ENCODE measurements at regions of chr17 and their contacts with region 1.

Region 1: GRCh38 chr17:59837308-59838051 is 55.3 kb downstream of the TUBD1 start:
- DNase-seq: no peak
- ATAC-seq: peak; percentile 87
- H3K4me3 Mint-ChIP-seq: peak overlapping the region; percentile 96
- H3K27ac Mint-ChIP-seq: peak overlapping the region; percentile 97
- H3K4me1 Mint-ChIP-seq: peaks cover 60% of the 10 kb centered on the region
- H3K27me3 Mint-ChIP-seq: no peaks in the 10 kb centered on the region
- CTCF ChIP-seq: no peak

Region 2: GRCh38 chr17:59775734-59776645 is 61.5 kb before region 1 on chr17:
- CTCF ChIA-PET with region 1: interaction called, 3 read pairs
- POLR2A ChIA-PET with region 1: interaction called, 10 read pairs
- intact Hi-C with region 1: no loop called
- DNase-seq: no peak
- ATAC-seq: no peak
- H3K4me3 Mint-ChIP-seq: no peak overlapping the region
- H3K27ac Mint-ChIP-seq: no peak overlapping the region
- H3K4me1 Mint-ChIP-seq: peaks cover 10% of the 10 kb centered on the region
- H3K27me3 Mint-ChIP-seq: no peaks in the 10 kb centered on the region
- CTCF ChIP-seq: no peak

Region 3: DNA sequence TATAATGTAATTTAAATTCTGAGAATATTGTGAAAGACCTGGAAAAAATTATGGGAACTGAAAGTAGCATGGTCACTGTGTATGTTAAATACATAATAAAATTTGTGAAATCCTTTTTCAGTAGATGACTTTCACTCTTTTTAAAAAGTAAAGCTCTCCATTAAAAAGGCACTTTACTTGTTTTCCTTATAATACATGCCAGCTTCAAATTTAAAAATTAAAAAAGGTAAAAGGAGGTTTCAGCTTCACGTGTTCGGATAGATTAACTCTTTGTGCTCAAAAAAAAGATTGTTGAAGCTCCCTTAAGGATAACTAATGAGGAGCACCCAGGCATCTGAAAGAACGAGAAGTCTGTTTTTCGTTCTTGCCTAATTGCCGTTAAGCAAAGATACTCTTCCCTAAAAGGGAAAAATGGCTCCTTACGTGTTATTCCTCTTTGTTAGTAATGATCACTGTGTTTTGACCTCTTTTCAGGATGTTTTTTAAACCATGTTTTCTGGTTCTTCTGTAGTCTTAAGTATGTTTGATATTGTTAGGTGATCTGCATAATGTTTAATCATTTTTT is 32.5 kb before region 1 on chr17:
- CTCF ChIA-PET with region 1: no interaction called
- POLR2A ChIA-PET with region 1: interaction called, 15 read pairs
- intact Hi-C with region 1: no loop called
- DNase-seq: no peak
- ATAC-seq: no peak
- H3K4me3 Mint-ChIP-seq: peak overlapping the region; percentile 71
- H3K27ac Mint-ChIP-seq: peak overlapping the region; percentile 76
- H3K4me1 Mint-ChIP-seq: peaks cover 11% of the 10 kb centered on the region
- H3K27me3 Mint-ChIP-seq: no peaks in the 10 kb centered on the region
- CTCF ChIP-seq: no peak

Region 4: GRCh38 chr17:59853168-59853918 is 15.9 kb after region 1 on chr17:
- CTCF ChIA-PET with region 1: interaction called, 16 read pairs
- POLR2A ChIA-PET with region 1: no interaction called
- intact Hi-C with region 1: loop called (anchors 2 kb)
- DNase-seq: no peak
- ATAC-seq: peak; percentile 78
- H3K4me3 Mint-ChIP-seq: no peak overlapping the region
- H3K27ac Mint-ChIP-seq: peak overlapping the region; percentile 78
- H3K4me1 Mint-ChIP-seq: peaks cover 25% of the 10 kb centered on the region
- H3K27me3 Mint-ChIP-seq: no peaks in the 10 kb centered on the region
- CTCF ChIP-seq: no peak

Region 5: DNA sequence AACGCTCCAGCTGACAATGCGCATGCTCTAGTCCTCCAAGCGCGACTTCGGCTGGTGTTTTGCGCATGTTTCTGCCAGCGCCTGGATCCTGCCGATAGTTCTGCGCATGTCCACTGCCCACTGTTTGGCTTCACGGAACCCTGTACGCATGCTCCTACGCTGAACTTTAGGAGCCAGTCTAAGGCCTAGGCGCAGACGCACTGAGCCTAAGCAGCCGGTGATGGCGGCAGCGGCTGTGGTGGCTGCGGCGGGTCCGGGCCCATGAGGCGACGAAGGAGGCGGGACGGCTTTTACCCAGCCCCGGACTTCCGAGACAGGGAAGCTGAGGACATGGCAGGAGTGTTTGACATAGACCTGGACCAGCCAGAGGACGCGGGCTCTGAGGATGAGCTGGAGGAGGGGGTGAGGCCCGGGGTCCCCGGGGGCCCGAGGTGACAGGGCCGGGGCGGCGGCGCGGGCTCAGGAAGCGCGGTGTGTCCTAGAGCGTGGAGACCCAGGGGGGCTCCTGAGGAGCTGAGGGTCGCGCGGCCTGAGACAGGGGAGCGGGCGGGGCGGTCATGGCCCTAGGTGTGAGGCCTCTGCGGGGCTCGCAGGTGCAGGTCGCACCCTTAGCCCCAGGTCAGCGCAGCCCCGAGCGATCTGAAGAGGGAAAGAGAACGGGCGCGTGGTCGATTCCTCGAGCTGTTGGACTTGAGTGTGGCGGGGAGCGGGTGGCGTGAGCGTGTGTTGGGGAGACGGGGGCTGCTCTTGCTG is 55.6 kb after region 1 on chr17 and contains the starts of genes RPS6KB1 and TUBD1:
- CTCF ChIA-PET with region 1: no interaction called
- POLR2A ChIA-PET with region 1: interaction called, 5 read pairs
- intact Hi-C with region 1: loop called (anchors 2 kb)
- DNase-seq: peak; percentile 86
- ATAC-seq: peak; percentile 91
- H3K4me3 Mint-ChIP-seq: peak within 1 kb of the TSS; percentile 99
- H3K27ac Mint-ChIP-seq: peak within 1 kb of the TSS; percentile 98
- H3K4me1 Mint-ChIP-seq: peaks cover 44% of the 10 kb centered on the region
- H3K27me3 Mint-ChIP-seq: no peaks in the 10 kb centered on the region
- CTCF ChIP-seq: no peak
- total RNA-seq, gene RPS6KB1: 57.7 and 63.0 TPM in 2 replicates
- total RNA-seq, gene TUBD1: 10.5 and 15.1 TPM in 2 replicates

Measured in activated B cell treated with CpG ODN at 0.5 μM for 24 hours (primary cell).